ENCODE measurements at regions of chr13 and their contacts with region 1.

Region 1: DNA sequence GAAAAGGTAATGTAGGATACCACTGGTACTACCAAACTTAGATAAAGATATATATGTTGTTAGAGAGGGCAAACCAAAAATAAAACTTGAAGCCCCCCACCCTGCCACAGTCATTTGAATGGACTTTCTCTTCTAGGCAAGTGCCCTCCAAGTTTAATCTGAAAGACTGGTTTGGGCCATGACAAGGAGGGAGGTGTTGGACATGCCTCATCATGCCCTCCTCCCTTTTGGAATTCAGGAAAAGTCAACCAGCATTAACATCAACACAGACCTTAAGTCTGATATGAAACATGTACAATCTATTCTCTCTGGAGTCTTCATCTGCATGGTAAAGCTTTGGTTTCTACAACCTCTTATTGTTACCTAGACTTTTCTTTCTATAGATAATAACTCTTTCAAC is 46.3 kb upstream of the GPR12 start:
- DNase-seq: no peak
- ATAC-seq: no peak
- H3K4me3 ChIP-seq: no peak overlapping the region
- H3K4me3 Mint-ChIP-seq: no peak overlapping the region
- H3K27ac ChIP-seq: no peak overlapping the region
- H3K27ac Mint-ChIP-seq: no peak overlapping the region
- H3K4me1 ChIP-seq: no peaks in the 10 kb centered on the region
- H3K4me1 Mint-ChIP-seq: no peaks in the 10 kb centered on the region
- H3K27me3 ChIP-seq: no peaks in the 10 kb centered on the region
- H3K27me3 Mint-ChIP-seq: peaks cover 44% of the 10 kb centered on the region
- CTCF ChIP-seq: no peak

Region 2: DNA sequence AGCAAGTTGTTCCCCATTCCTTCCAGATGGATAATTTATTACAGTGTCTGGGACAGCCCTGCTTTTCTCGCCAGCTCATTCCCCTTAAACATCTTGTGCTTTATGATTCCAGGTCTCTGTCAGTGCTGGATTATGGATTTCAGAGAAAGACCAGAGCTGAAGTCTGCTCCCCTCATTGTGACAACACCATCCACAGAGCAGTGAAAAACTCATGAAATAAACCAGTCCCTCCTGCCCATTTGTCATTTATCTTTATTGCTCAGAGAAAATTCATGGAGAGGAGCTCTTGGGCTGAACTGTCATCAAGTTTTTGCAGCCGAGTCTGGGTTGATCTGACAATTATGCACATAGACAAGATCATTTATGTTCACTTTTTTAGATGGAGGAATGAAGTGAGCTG is 46.4 kb after region 1 on chr13:
- CTCF ChIA-PET with region 1: no interaction called
- POLR2A ChIA-PET with region 1: no interaction called
- intact Hi-C with region 1: loop called in 1 of 2 experiments (anchors 1 kb)
- DNase-seq: no peak
- ATAC-seq: no peak
- H3K4me3 ChIP-seq: no peak overlapping the region
- H3K4me3 Mint-ChIP-seq: no peak overlapping the region
- H3K27ac ChIP-seq: no peak overlapping the region
- H3K27ac Mint-ChIP-seq: no peak overlapping the region
- H3K4me1 ChIP-seq: no peaks in the 10 kb centered on the region
- H3K4me1 Mint-ChIP-seq: no peaks in the 10 kb centered on the region
- H3K27me3 ChIP-seq: no peaks in the 10 kb centered on the region
- H3K27me3 Mint-ChIP-seq: peaks cover 40% of the 10 kb centered on the region
- CTCF ChIP-seq: no peak